HepG2 (cell line): ENCODE measurements at regions of chr5 and their contacts with region 1.

Region 1: DNA sequence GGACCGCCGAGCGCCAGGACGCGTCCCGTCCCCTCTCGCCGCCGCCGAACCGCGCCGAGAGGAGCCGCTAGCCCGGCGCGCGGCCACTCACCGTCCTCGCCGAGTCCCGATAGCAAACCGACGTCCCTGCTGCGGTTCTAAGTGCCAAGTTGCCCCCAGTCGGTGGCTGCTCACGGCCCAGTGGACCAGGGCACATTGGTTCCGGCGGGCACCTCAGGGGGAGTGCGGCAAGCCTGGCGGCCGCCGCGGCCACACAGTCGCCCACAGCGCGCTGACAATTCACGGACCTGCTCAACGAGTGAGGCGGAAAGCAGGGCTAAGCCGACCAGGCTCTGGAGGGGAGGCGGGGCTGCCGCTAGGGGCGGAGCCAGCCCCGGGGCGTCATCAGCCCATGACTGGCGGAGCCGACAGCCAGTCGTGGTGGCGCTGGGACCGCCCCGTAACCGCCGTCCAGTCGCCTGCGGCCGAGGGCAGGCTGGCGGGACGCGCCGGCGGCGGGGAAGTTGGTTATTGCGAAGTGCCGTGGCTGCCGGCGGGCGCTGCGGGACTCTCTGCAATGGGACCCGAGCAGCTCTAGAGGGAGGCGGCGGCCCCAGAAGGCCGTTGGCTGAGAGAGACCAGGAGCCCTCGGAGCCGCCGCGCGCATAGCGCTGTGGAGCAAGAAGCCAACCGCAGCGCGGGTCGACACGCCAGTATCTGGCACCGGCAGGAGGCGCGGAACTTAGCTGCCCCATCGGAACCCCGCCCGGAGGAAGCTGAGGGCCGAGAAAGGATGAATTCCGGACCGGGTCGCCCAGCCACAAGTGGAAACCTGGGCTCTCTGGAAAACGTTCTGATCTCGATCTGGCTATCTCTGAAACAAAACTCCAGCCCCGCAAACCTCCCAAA is at the start of gene MARCHF3:
- DNase-seq: peak; percentile 85
- ATAC-seq: peak; percentile 94
- H3K4me3 ChIP-seq: peak within 1 kb of the TSS; percentile 60 to 90 (median 88)
- H3K27ac ChIP-seq: peak within 1 kb of the TSS; percentile 78
- H3K4me1 ChIP-seq: peaks cover 54% of the 10 kb centered on the region
- H3K27me3 ChIP-seq: no peaks in the 10 kb centered on the region
- CTCF ChIP-seq: peak; percentile 46
- EP300 ChIP-seq: no peak
- POLR2A ChIP-seq: peak; percentile 89 to 90
- RAD21 ChIP-seq: peak; percentile 7; the same call in 1 of the 2 replicates
- total RNA-seq, gene MARCHF3: 9.0 and 11.9 TPM in 2 replicates

Region 2: GRCh38 chr5:126656396-126657007 is 374.0 kb before region 1 on chr5:
- CTCF ChIA-PET with region 1: no interaction called
- POLR2A ChIA-PET with region 1: no interaction called
- in situ Hi-C with region 1: loop called (anchors 25 kb)
- intact Hi-C with region 1: loop called (anchors 2 kb)
- DNase-seq: peak; percentile 41
- ATAC-seq: no peak
- H3K4me3 ChIP-seq: no peak overlapping the region
- H3K27ac ChIP-seq: no peak overlapping the region
- H3K4me1 ChIP-seq: peaks cover 43% of the 10 kb centered on the region
- H3K27me3 ChIP-seq: no peaks in the 10 kb centered on the region
- CTCF ChIP-seq: peak; percentile 77
- EP300 ChIP-seq: no peak
- POLR2A ChIP-seq: no peak
- RAD21 ChIP-seq: peak; percentile 51

Region 3: DNA sequence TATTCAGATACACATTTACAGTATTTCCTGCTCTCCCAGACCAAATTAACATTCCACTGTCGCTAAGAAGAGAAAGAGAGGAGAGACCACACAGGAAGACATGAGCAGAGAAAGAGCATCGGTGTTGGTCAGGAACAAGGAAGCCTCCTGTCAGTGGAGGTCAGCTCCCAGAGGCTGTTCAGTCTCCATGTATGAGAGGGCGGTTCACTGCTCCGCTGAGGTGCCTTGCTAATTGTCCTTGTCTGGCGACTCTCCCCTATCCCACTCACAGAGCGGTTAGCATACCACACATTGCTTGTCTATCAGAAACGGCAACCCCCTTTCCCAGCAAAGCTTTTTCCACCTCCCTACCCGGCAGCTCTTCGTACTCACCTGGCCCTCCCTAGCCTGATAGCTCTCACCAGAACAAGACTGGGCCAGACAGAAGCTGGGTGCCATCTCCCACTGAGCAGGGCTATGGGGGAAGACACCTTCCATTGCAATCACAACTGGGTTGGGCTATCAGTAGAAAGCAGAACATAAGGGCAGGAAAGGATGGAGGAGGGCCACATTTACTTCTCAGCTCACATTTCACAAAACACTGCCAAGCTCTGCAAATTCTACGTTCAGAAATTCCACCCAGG is 312.1 kb before region 1 on chr5:
- CTCF ChIA-PET with region 1: no interaction called
- POLR2A ChIA-PET with region 1: no interaction called
- in situ Hi-C with region 1: no loop called
- intact Hi-C with region 1: no loop called
- DNase-seq: no peak
- ATAC-seq: peak; percentile 73
- H3K4me3 ChIP-seq: no peak overlapping the region
- H3K27ac ChIP-seq: no peak overlapping the region
- H3K4me1 ChIP-seq: no peaks in the 10 kb centered on the region
- H3K27me3 ChIP-seq: no peaks in the 10 kb centered on the region
- CTCF ChIP-seq: no peak
- EP300 ChIP-seq: no peak
- POLR2A ChIP-seq: no peak
- RAD21 ChIP-seq: no peak

Region 4: GRCh38 chr5:126794157-126794828 is 236.2 kb before region 1 on chr5:
- CTCF ChIA-PET with region 1: no interaction called
- POLR2A ChIA-PET with region 1: no interaction called
- in situ Hi-C with region 1: no loop called
- intact Hi-C with region 1: loop called (anchors 1 kb)
- DNase-seq: no peak
- ATAC-seq: peak; percentile 19; the same call in 1 of the 3 replicates
- H3K4me3 ChIP-seq: no peak overlapping the region
- H3K27ac ChIP-seq: no peak overlapping the region
- H3K4me1 ChIP-seq: peaks cover 41% of the 10 kb centered on the region
- H3K27me3 ChIP-seq: no peaks in the 10 kb centered on the region
- CTCF ChIP-seq: no peak
- EP300 ChIP-seq: no peak
- POLR2A ChIP-seq: no peak
- RAD21 ChIP-seq: no peak

Region 5: DNA sequence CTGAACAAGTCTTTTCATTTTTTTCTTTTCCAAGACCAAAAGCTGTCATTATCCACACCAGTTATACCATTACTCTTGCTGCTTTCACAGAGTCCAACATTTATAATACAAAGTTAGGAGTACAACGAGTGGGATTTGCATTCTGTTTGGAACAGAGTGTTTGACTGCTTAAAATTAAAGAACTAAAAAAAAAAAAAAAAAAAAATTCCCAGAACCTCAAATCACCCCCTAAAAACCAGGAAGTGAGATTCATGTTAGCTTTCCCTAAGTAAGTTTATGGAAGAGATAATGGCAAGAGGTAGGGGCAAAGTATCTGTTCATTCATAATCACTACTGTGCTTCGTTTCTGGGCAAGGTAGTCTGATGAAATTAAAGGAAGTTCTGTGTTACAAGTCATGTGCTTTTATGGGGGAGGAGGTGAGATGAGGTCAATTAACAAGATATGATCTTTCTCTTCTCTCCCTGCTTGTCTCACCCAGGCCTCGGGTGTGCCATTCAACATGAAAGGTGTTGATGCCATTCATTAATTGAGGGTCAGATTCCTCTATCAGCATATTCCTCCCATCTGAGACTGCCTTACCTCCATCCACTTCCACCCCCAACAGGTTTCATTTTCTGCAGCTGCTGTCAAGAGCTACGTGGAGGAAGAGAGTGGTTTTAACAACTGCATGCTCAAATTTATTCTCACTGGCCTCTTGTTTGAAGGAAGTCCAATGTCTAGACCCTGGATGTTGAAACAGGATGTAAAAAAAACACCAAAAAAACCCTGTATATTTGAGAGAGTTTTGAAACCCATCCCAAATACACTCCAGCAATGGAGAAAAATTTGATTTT is 58.2 kb before region 1 on chr5:
- CTCF ChIA-PET with region 1: no interaction called
- POLR2A ChIA-PET with region 1: no interaction called
- in situ Hi-C with region 1: no loop called
- intact Hi-C with region 1: loop called (anchors 5 kb)
- DNase-seq: peak; percentile 39
- ATAC-seq: peak; percentile 81
- H3K4me3 ChIP-seq: no peak overlapping the region
- H3K27ac ChIP-seq: peak overlapping the region; percentile 31
- H3K4me1 ChIP-seq: peaks cover 22% of the 10 kb centered on the region
- H3K27me3 ChIP-seq: no peaks in the 10 kb centered on the region
- CTCF ChIP-seq: no peak
- EP300 ChIP-seq: no peak
- POLR2A ChIP-seq: no peak
- RAD21 ChIP-seq: no peak

Region 6: DNA sequence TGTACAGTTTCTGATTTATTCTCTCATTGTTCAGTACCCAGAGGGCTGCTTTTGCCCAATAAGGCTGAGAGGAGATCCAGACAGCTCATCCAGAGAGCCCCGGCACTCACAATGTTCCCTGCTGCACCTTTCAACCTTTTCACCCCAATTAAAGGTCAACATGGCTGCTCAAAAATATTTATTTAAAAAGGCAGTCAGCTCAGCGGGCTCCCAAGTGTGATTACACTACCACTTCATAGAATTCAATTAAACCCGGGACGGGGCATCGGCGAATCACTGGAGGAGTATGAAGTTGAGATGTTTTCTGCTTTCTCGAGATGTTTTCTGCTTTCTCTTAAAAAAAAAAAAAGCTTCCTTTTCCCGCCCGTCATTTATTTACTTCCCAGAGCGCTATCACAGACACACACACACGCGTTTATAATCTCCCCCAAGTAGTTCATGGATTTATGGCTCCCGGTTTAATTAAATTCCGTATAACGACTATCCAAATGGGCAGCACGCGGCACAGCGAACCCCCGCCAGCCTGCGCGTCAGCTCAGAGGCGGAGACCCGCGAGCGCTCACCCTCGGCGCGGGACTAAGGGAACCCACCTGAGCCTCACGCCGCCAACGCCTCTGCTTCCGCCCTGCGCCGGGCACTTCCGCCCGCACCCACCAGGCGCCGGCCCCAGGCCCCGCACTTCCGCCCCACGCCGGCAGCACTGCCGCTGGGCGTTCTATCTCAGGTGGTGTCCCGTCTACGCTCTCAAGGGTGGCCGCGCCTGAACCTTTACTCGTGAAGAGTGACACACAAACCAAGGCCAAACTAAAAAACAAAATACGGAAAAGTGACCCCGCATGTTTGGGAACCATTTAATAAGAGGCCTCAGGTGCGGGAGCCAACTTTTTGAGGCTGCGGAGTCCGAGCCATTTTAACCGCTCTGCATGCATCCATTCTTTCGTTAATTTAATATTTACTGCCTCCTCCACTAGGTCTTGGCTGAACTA is 42.7 kb after region 1 on chr5 and contains the start of gene C5orf63:
- CTCF ChIA-PET with region 1: no interaction called
- POLR2A ChIA-PET with region 1: interaction called, 23 read pairs
- in situ Hi-C with region 1: no loop called
- intact Hi-C with region 1: loop called (anchors 1 kb)
- DNase-seq: peak; percentile 61
- ATAC-seq: peak; percentile 100
- H3K4me3 ChIP-seq: peak within 1 kb of the TSS; percentile 67 to 74 (median 68)
- H3K27ac ChIP-seq: peak within 1 kb of the TSS; percentile 57
- H3K4me1 ChIP-seq: peaks cover 49% of the 10 kb centered on the region
- H3K27me3 ChIP-seq: 0 out of 5 replicates have a peak, but pooled peaks cover 0 to 1% of the 10 kb centered on the region in 2 experiments
- CTCF ChIP-seq: peak; percentile 16; the same call in 1 of the 2 replicates
- EP300 ChIP-seq: 0 out of 4 replicates have a peak, but pooled peaks of 1 of the 2 experiments have one; percentile 9
- POLR2A ChIP-seq: peak; percentile 64 to 86
- RAD21 ChIP-seq: peak; percentile 36
- total RNA-seq, gene C5orf63: 8.8 and 9.1 TPM in 2 replicates

Region 7: GRCh38 chr5:127092690-127093089 is 62.2 kb after region 1 on chr5:
- CTCF ChIA-PET with region 1: no interaction called
- POLR2A ChIA-PET with region 1: no interaction called
- in situ Hi-C with region 1: no loop called
- intact Hi-C with region 1: no loop called
- DNase-seq: no peak
- ATAC-seq: no peak
- H3K4me3 ChIP-seq: no peak overlapping the region
- H3K27ac ChIP-seq: no peak overlapping the region
- H3K4me1 ChIP-seq: peaks cover 10% of the 10 kb centered on the region
- H3K27me3 ChIP-seq: no peaks in the 10 kb centered on the region; a peak in 2 of 5 replicates
- CTCF ChIP-seq: no peak
- EP300 ChIP-seq: no peak
- POLR2A ChIP-seq: no peak
- RAD21 ChIP-seq: no peak

Region 8: DNA sequence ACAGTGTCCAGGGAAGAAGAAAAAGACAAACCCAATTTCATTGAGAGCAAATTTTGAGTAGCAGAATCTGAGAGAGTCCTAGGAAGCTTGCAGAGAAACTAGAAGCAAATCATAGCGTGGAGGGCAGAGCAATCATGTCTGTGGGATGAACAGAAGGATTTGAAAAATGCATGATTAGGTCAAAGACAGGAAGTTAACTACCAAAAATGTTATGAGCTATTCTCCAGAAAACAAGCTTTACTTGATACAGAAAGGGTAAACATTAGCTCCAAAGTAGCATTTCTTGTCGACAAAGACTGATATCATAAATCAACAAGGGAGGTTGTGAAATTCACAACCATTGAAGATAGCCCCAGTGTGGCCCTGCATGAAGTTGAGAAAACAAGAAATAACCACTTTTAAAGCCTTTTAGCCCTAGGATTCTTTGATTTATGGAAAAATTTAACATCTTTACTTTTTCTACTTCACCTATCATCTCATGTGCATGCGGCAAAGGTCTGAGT is 162.4 kb after region 1 on chr5:
- CTCF ChIA-PET with region 1: no interaction called
- POLR2A ChIA-PET with region 1: interaction called, 4 read pairs
- in situ Hi-C with region 1: no loop called
- intact Hi-C with region 1: loop called (anchors 5 kb)
- DNase-seq: no peak
- ATAC-seq: no peak
- H3K4me3 ChIP-seq: no peak overlapping the region
- H3K27ac ChIP-seq: no peak overlapping the region
- H3K4me1 ChIP-seq: peaks cover 11% of the 10 kb centered on the region
- H3K27me3 ChIP-seq: no peaks in the 10 kb centered on the region; a peak in 1 of 5 replicates
- CTCF ChIP-seq: no peak
- EP300 ChIP-seq: no peak
- POLR2A ChIP-seq: no peak
- RAD21 ChIP-seq: no peak